ENCODE measurements at regions of chr9 and their contacts with region 1.

Region 1: GRCh38 chr9:122125158-122125508 is 32.0 kb upstream of the TTLL11 start:
- DNase-seq: peak; percentile 83
- ATAC-seq: peak; percentile 83
- H3K4me3 ChIP-seq: no peak overlapping the region
- H3K4me3 Mint-ChIP-seq: peak overlapping the region; percentile 36
- H3K27ac ChIP-seq: no peak overlapping the region
- H3K27ac Mint-ChIP-seq: no peak overlapping the region
- H3K4me1 ChIP-seq: peaks cover 17 to 26% of the 10 kb centered on the region in 2 donors
- H3K4me1 Mint-ChIP-seq: peaks cover 13% of the 10 kb centered on the region
- H3K27me3 ChIP-seq: peaks cover 0 to 40% (median 22%) of the 10 kb centered on the region in 4 experiments
- H3K27me3 Mint-ChIP-seq: peaks cover 57% of the 10 kb centered on the region
- CTCF ChIP-seq: peak; percentile 92

Region 2: GRCh38 chr9:122099271-122099869 is 25.8 kb before region 1 on chr9:
- CTCF ChIA-PET with region 1: interaction called, 115 read pairs
- POLR2A ChIA-PET with region 1: no interaction called
- intact Hi-C with region 1: loop called (anchors 1 kb)
- DNase-seq: peak; percentile 85
- ATAC-seq: peak; percentile 87
- H3K4me3 ChIP-seq: no peak overlapping the region
- H3K4me3 Mint-ChIP-seq: peak overlapping the region; percentile 30
- H3K27ac ChIP-seq: no peak overlapping the region
- H3K27ac Mint-ChIP-seq: no peak overlapping the region
- H3K4me1 ChIP-seq: peaks cover 10 to 11% of the 10 kb centered on the region in 2 donors
- H3K4me1 Mint-ChIP-seq: peaks cover 12% of the 10 kb centered on the region
- H3K27me3 ChIP-seq: peaks cover 0 to 7% (median 3%) of the 10 kb centered on the region in 4 experiments
- H3K27me3 Mint-ChIP-seq: peaks cover 12% of the 10 kb centered on the region
- CTCF ChIP-seq: peak; percentile 88

Region 3: DNA sequence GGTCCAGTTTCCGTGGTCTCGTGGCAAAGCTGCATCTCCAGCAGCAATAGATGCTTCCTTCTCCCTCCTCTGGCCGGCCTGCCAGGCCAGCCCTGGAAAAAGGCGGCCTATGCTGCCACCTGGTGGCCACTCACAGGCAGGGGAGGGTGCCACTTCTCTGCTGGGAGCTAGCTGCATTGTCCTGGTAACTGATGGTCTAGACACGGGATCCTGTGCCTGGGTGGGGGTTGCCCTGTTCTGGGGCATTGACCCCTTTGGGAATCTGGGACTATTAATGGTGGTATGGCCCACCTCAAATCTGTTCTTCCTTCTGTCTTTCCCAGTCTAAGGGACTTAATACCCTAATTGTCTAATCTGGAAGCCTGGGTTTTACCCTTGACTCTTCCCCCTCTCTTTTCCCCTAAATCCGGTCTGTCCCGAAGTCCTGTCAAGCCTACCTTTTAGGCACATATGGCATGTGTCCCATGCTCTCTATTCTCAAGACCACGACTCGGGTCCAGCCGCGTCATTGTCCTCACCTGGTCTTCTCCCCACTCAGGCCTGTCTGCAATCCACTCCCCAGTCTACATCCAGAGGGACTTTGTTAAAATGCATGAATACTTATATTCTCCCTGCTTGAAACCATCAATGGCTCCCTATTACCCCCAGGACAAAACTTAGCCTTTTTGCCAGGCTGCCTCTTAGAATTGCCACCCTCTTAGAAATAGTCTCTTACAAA is 225.7 kb after region 1 on chr9:
- CTCF ChIA-PET with region 1: interaction called, 323 read pairs
- POLR2A ChIA-PET with region 1: interaction called, 5 read pairs
- intact Hi-C with region 1: no loop called
- DNase-seq: peak; percentile 81
- ATAC-seq: peak; percentile 86
- H3K4me3 ChIP-seq: no peak overlapping the region
- H3K4me3 Mint-ChIP-seq: no peak overlapping the region
- H3K27ac ChIP-seq: no peak overlapping the region
- H3K27ac Mint-ChIP-seq: no peak overlapping the region
- H3K4me1 ChIP-seq: peaks cover 9 to 12% of the 10 kb centered on the region in 2 donors
- H3K4me1 Mint-ChIP-seq: peaks cover 6% of the 10 kb centered on the region
- H3K27me3 ChIP-seq: peaks cover 0 to 35% (median 12%) of the 10 kb centered on the region in 4 experiments
- H3K27me3 Mint-ChIP-seq: peaks cover 30% of the 10 kb centered on the region
- CTCF ChIP-seq: peak; percentile 93

Region 4: DNA sequence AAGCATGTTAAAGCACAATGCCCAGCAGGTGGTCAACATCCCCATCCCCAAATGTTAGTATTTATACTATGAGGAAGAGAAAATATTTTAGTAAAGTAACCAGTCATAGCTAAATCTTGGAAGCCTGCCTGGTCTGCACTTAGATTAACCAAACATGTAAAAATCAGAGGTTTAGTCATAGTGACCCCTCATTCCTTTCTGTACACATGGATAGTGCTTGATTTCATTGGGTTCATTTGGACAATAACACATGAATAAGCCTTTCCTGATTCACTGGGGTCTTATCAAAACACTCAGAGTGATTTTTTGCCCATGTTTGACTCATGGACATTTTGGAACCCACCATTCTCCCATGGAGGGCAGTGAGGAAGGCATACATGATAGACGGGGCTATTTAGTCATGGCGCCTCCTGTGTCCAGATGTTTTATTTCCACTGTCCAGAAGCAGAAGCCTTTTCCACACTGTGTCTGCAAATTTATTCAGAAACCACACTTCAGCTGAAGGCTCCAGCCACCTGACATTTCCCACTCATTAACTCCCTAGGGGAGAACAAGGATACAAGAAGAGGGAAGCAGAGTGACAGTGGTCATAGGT is 320.1 kb after region 1 on chr9:
- CTCF ChIA-PET with region 1: interaction called, 19 read pairs
- POLR2A ChIA-PET with region 1: no interaction called
- intact Hi-C with region 1: no loop called
- DNase-seq: no peak
- ATAC-seq: no peak
- H3K4me3 ChIP-seq: no peak overlapping the region
- H3K4me3 Mint-ChIP-seq: no peak overlapping the region
- H3K27ac ChIP-seq: no peak overlapping the region
- H3K27ac Mint-ChIP-seq: no peak overlapping the region
- H3K4me1 ChIP-seq: no peaks in the 10 kb centered on the region
- H3K4me1 Mint-ChIP-seq: no peaks in the 10 kb centered on the region
- H3K27me3 ChIP-seq: peaks cover 0 to 20% (median 4%) of the 10 kb centered on the region in 4 experiments
- H3K27me3 Mint-ChIP-seq: peaks cover 42% of the 10 kb centered on the region
- CTCF ChIP-seq: no peak

Region 5: DNA sequence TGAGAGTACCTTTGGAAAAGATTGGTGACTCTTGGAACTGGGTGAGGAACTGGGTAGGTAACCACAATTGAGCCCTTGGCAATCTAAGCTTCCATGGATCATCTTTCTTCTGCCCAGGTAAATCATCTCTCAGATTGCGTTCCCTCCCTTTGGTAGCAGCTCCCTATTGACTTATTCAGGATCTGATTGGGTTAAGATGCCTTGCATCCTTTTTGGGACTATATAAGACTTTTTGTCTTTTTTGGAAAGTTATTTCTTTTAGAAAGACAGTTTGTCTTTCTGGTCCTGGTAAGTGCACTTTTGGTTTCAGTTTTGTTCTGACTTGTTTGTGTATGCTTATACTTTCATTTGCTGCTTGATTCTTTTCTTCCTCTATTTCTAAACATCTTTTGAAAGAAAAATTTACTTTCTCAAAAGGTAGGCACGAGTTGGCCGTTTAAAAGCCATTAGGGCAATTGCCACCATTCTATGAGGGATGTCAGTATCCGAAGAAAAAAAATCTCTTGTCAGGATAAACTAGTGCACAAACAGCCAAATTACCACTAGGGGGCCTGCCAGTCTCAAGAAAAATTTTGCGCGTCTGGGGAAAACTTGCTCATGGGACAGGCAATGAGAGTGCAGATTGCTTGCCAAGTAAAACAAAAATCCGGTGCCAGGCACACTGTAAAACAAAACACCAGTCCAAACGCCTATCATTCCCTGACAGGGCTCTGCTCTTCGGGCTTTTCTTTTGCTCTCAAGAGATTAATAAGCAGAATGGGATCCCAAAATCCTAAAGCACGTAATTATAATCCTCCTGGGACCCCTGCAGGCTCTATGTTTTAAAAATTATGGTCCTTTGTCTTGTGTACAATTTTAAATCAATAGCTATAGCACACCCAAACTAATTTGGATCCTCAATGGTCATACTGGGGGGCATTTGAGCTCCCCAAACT is 339.8 kb after region 1 on chr9:
- CTCF ChIA-PET with region 1: interaction called, 17 read pairs
- POLR2A ChIA-PET with region 1: no interaction called
- intact Hi-C with region 1: no loop called
- DNase-seq: peak; percentile 83
- ATAC-seq: peak; percentile 80
- H3K4me3 ChIP-seq: peak overlapping the region; percentile 38 to 81 (median 59)
- H3K4me3 Mint-ChIP-seq: peak overlapping the region; percentile 93
- H3K27ac ChIP-seq: peak overlapping the region; percentile 35 to 57
- H3K27ac Mint-ChIP-seq: peak overlapping the region; percentile 86
- H3K4me1 ChIP-seq: peaks cover 6 to 13% of the 10 kb centered on the region in 2 donors
- H3K4me1 Mint-ChIP-seq: peaks cover 13% of the 10 kb centered on the region
- H3K27me3 ChIP-seq: peaks cover 0 to 10% (median 8%) of the 10 kb centered on the region in 4 experiments
- H3K27me3 Mint-ChIP-seq: peaks cover 47% of the 10 kb centered on the region
- CTCF ChIP-seq: peak; percentile 89

Region 6: DNA sequence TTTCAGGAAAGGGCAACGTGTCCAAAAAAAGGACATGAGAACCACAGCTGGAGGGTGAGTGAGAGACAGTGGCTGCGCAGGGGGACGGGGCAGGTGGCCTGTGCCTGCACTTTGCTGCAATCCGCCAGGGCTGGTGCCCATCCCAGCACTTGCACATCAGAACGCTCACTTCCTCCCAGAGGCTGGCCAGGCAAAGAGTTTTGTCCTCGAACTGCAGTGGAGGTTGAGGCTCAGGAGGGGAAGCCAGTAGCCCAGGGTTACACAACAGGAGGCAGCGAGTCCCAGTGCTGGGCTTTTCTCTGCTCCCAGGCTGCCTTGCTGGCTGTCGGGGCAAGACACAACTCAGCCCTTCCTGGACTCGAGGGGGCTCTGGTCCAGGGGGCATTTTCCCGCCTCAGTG is 1263.9 kb after region 1 on chr9:
- CTCF ChIA-PET with region 1: no interaction called
- POLR2A ChIA-PET with region 1: no interaction called
- intact Hi-C with region 1: loop called (anchors 10 kb)
- DNase-seq: no peak
- ATAC-seq: no peak
- H3K4me3 ChIP-seq: no peak overlapping the region
- H3K4me3 Mint-ChIP-seq: no peak overlapping the region
- H3K27ac ChIP-seq: no peak overlapping the region
- H3K27ac Mint-ChIP-seq: no peak overlapping the region
- H3K4me1 ChIP-seq: no peaks in the 10 kb centered on the region
- H3K4me1 Mint-ChIP-seq: peaks cover 2% of the 10 kb centered on the region
- H3K27me3 ChIP-seq: no peaks in the 10 kb centered on the region
- H3K27me3 Mint-ChIP-seq: no peaks in the 10 kb centered on the region
- CTCF ChIP-seq: no peak

Region 7: DNA sequence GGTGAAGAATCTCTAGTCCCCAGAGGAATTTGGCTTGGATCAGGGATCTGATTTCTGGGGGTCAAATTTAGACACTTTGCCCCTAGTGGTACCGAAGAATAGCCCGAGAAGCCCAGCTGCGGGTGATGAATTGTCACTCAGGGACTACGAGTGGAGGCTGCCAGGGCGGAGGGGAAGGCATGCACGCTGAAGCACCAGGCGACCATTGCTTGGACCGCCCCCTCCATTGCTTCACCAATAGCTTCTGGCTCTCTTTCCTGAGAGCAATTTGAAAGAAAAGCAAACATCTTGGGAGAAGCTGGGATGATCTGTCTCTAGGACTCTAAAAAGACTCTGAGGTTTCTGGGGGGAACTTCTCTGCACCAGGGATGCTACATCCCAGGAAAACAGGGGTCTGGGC is 1368.5 kb after region 1 on chr9:
- CTCF ChIA-PET with region 1: no interaction called
- POLR2A ChIA-PET with region 1: no interaction called
- intact Hi-C with region 1: no loop called
- DNase-seq: no peak
- ATAC-seq: no peak
- H3K4me3 ChIP-seq: no peak overlapping the region
- H3K4me3 Mint-ChIP-seq: no peak overlapping the region
- H3K27ac ChIP-seq: no peak overlapping the region
- H3K27ac Mint-ChIP-seq: no peak overlapping the region
- H3K4me1 ChIP-seq: no peaks in the 10 kb centered on the region
- H3K4me1 Mint-ChIP-seq: no peaks in the 10 kb centered on the region
- H3K27me3 ChIP-seq: no peaks in the 10 kb centered on the region
- H3K27me3 Mint-ChIP-seq: no peaks in the 10 kb centered on the region
- CTCF ChIP-seq: no peak

Measured in B cell (primary cell).